Ovary (tissue), 10 donors: ENCODE measurements at regions of chr15 and their contacts with region 1.

Region 1: GRCh38 chr15:80769829-80770705 is 9.1 kb upstream of the CEMIP start:
- DNase-seq: no peak
- H3K4me3 ChIP-seq: no peak overlapping the region
- H3K27ac ChIP-seq: no peak overlapping the region
- H3K4me1 ChIP-seq: no peaks in the 10 kb centered on the region
- H3K27me3 ChIP-seq: no peaks in the 10 kb centered on the region
- CTCF ChIP-seq: no peak
- EP300 ChIP-seq: no peak
- POLR2A ChIP-seq: no peak

Region 2: DNA sequence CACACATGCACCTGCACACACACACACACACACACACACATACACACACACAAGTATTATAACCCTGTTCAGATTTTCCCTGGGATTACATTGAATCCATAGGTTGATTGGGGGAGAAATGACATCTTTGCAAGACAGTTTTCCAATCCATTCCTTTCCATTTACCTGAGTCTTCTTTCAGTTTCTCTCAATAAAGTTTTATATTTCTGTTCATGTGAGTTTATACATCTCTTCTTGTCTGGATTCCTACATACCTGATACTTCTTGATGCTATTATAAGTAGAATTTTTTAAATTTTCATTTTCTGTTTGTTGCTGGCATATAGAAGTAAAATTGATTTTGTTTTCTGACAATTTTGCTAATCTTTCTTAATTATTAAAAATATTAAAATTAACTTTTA is 1382.5 kb before region 1 on chr15:
- intact Hi-C with region 1: loop called in 1 of 4 experiments (anchors 5 kb)
- DNase-seq: no peak
- H3K4me3 ChIP-seq: no peak overlapping the region
- H3K27ac ChIP-seq: no peak overlapping the region
- H3K4me1 ChIP-seq: no peaks in the 10 kb centered on the region
- H3K27me3 ChIP-seq: no peaks in the 10 kb centered on the region
- CTCF ChIP-seq: no peak
- EP300 ChIP-seq: no peak
- POLR2A ChIP-seq: no peak

Region 3: DNA sequence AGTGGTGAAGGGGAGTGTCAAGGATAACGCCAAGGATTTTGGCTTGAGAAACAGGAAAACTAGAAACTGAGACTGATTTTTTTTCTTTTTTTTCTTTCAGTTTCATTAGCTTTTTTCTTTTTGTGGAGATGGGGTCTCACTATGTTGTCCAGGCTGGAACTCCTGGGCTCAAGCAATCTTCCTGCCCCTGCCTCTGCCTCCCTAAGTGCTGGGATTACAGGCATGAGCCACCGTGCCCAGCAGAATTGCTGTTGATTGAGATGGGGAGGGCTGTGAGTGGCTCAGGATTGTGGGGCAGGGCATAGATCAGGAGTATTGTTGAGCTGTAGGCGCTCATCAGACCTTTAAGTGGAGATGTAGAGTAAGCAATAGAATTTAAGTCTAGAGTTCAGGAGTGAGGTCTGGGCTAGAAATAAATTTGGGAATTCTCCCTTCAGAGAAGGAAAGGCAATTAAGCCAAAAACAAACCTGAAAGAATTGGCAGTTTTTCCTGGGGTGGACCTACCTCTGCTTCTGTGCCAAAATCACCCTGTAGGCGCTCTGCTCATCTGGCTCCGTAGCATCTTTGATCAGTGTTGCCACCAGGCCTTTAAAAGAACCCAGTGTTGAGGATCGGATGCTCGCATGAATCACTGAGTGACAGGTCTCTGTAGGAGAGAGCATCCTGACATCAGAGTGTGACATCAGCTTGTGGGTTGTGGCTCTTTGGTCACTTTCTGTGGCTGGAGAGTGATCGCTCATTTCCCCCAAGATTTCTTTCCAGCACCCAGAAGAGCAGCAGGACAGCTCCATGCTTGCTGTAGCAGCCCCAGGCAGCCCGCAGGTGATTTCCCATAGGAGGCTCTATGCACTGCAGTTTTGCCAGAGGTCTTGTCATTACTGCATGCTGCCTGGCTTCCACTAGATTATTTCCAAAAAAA is 59.2 kb before region 1 on chr15:
- intact Hi-C with region 1: no loop called
- DNase-seq: no peak
- H3K4me3 ChIP-seq: no peak overlapping the region
- H3K27ac ChIP-seq: no peak overlapping the region
- H3K4me1 ChIP-seq: no peaks in the 10 kb centered on the region
- H3K27me3 ChIP-seq: no peaks in the 10 kb centered on the region
- CTCF ChIP-seq: no peak
- EP300 ChIP-seq: no peak
- POLR2A ChIP-seq: no peak